RWPE1 (cell line): ENCODE measurements at regions of chrX and their contacts with region 1.

Region 1: GRCh38 chrX:56462389-56462788 is 101.0 kb upstream of the UBQLN2 start:
- DNase-seq: peak; percentile 2
- H3K27ac ChIP-seq: no peak overlapping the region
- CTCF ChIP-seq: no peak

Region 2: GRCh38 chrX:56232221-56233082 is 229.9 kb before region 1 on chrX and contains the start of gene KLF8:
- CTCF ChIA-PET with region 1: no interaction called
- POLR2A ChIA-PET with region 1: no interaction called
- DNase-seq: peak; percentile 31
- H3K27ac ChIP-seq: no peak within 1 kb of the TSS
- CTCF ChIP-seq: no peak

Region 3: GRCh38 chrX:56429581-56429980 is 32.8 kb before region 1 on chrX:
- CTCF ChIA-PET with region 1: no interaction called
- POLR2A ChIA-PET with region 1: no interaction called
- DNase-seq: no peak
- H3K27ac ChIP-seq: no peak overlapping the region
- CTCF ChIP-seq: no peak

Region 4: GRCh38 chrX:56572975-56573374 is 110.6 kb after region 1 on chrX:
- CTCF ChIA-PET with region 1: no interaction called
- POLR2A ChIA-PET with region 1: no interaction called
- DNase-seq: no peak
- H3K27ac ChIP-seq: no peak overlapping the region
- CTCF ChIP-seq: no peak

Region 5: DNA sequence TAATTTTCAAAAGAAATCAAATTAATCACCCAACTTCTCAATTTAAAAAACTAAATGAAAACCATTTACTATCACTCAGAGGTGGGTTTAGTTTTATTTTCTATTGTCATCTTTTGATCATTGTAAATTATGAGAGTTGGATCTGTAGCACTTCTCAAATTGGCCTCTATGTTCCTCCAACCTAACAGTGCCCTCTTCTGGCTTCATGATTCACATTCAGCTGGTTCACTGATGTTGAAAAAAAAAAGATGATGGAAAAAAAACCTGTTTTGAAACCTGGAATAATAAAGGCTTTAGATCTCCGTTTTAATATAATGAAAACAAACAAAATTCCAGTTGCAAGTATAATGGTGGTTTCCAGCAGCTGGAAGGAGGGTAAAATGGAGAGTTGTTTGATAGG is 264.2 kb after region 1 on chrX:
- CTCF ChIA-PET with region 1: interaction called, 18 read pairs
- POLR2A ChIA-PET with region 1: no interaction called
- DNase-seq: no peak
- H3K27ac ChIP-seq: no peak overlapping the region
- CTCF ChIP-seq: peak; percentile 50